Vagina (tissue), 2 donors: ENCODE measurements at regions of chr14 and their contacts with region 1.

Region 1: DNA sequence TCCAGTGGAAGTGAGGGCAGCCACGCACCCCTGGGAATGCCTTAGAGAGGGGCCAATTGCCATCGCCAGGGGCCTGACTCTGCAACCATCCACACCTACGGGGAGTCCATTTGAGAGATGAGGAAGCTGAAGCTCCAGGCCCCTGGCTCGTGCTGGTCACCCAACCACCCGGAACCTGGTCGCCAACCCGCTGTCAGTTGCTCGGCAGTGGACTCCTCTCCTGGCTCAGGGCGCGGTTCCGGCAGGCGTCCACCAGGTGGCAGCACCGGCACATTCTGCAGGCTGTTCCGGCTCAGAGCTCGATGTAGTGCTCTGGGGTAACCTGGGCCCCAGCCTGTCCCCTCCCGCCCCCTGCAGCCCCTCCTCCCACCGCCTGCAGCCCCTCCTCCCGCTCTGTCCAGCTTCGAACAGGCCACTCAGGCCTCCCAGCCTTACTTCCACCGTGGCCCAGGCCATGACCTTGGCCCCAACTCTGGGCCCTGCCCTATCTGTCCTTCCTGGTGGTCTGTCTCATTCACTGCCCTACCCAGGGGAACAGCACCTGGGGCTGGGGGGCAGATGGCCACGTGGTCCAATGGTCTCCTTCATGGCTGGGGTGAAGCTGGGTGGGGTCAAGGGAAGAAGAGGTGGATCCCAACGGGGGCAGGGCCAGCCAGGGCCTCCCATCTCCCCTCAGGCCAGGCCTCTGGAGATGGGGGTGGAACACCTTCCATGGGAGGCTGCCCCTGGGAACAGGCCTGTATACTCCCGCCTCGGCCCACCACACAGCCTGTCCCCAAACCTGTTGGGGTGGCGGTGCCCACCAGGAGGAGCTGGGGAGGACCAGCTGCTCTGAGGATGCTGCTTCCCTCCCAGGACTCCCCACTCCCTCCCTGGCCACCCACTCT is 15.7 kb downstream of the SIVA1 start:
- DNase-seq: no peak
- H3K4me3 ChIP-seq: no peak overlapping the region
- H3K27ac ChIP-seq: peak overlapping the region; percentile 14
- H3K4me1 ChIP-seq: peaks cover 11% of the 10 kb centered on the region
- H3K27me3 ChIP-seq: no peaks in the 10 kb centered on the region
- CTCF ChIP-seq: peak; percentile 57 to 95 (median 83)
- POLR2A ChIP-seq: no peak

Region 2: DNA sequence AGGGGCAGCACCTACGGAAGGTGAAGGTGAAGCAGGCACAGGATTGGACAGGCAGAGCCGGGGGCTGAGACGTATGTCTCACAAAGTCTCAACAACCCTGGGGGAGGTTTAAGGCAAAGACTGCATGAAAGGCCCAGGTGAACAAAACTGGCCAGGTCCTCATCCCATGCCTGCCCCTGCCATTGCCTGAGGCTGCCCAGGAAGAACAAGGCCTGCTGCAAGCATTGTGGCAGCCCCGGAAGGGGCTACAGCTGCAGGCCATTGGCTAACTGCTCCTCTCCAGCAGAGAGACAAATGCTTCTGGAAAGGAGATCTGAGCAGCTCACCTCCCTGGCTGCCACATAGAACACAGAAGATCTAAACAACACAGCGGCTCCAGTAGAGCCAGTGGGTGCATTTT is 143.7 kb before region 1 on chr14:
- intact Hi-C with region 1: no loop called
- DNase-seq: no peak
- H3K4me3 ChIP-seq: no peak overlapping the region
- H3K27ac ChIP-seq: no peak overlapping the region
- H3K4me1 ChIP-seq: no peaks in the 10 kb centered on the region
- H3K27me3 ChIP-seq: no peaks in the 10 kb centered on the region
- CTCF ChIP-seq: no peak
- POLR2A ChIP-seq: no peak

Region 3: GRCh38 chr14:104826189-104826860 is 57.6 kb after region 1 on chr14:
- intact Hi-C with region 1: loop called (anchors 1 kb)
- DNase-seq: no peak
- H3K4me3 ChIP-seq: peak overlapping the region; percentile 59 to 89
- H3K27ac ChIP-seq: peak overlapping the region; percentile 73
- H3K4me1 ChIP-seq: peaks cover 27% of the 10 kb centered on the region
- H3K27me3 ChIP-seq: no peaks in the 10 kb centered on the region
- CTCF ChIP-seq: peak; percentile 49 to 85 (median 72)
- POLR2A ChIP-seq: no peak

Region 4: GRCh38 chr14:105123981-105124765 is 355.5 kb after region 1 on chr14:
- intact Hi-C with region 1: no loop called
- DNase-seq: peak in 1 of 2 donors; percentile 88
- H3K4me3 ChIP-seq: no peak overlapping the region
- H3K27ac ChIP-seq: no peak overlapping the region
- H3K4me1 ChIP-seq: peaks cover 6% of the 10 kb centered on the region
- H3K27me3 ChIP-seq: no peaks in the 10 kb centered on the region
- CTCF ChIP-seq: no peak
- POLR2A ChIP-seq: no peak